ENCODE measurements at regions of chr7 and their contacts with region 1.

Region 1: GRCh38 chr7:27810186-27810585 is 70.2 kb downstream of the TAX1BP1 start:
- DNase-seq: no peak
- ATAC-seq: no peak
- H3K4me3 ChIP-seq: no peak overlapping the region
- H3K27ac ChIP-seq: no peak overlapping the region
- H3K4me1 ChIP-seq: peaks cover 0 to 6% of the 10 kb centered on the region in 2 experiments; a peak in 3 of 5 replicates
- H3K27me3 ChIP-seq: no peaks in the 10 kb centered on the region
- CTCF ChIP-seq: no peak
- EP300 ChIP-seq: no peak
- POLR2A ChIP-seq: no peak
- RAD21 ChIP-seq: no peak

Region 2: GRCh38 chr7:27751888-27752660 is 58.1 kb before region 1 on chr7:
- CTCF ChIA-PET with region 1: no interaction called
- POLR2A ChIA-PET with region 1: no interaction called
- in situ Hi-C with region 1: no loop called
- intact Hi-C with region 1: no loop called
- DNase-seq: no peak
- ATAC-seq: no peak
- H3K4me3 ChIP-seq: no peak overlapping the region
- H3K27ac ChIP-seq: no peak overlapping the region
- H3K4me1 ChIP-seq: no peaks in the 10 kb centered on the region; a peak in 1 of 5 replicates
- H3K27me3 ChIP-seq: no peaks in the 10 kb centered on the region
- CTCF ChIP-seq: no peak
- EP300 ChIP-seq: no peak
- POLR2A ChIP-seq: no peak
- RAD21 ChIP-seq: no peak

Region 3: DNA sequence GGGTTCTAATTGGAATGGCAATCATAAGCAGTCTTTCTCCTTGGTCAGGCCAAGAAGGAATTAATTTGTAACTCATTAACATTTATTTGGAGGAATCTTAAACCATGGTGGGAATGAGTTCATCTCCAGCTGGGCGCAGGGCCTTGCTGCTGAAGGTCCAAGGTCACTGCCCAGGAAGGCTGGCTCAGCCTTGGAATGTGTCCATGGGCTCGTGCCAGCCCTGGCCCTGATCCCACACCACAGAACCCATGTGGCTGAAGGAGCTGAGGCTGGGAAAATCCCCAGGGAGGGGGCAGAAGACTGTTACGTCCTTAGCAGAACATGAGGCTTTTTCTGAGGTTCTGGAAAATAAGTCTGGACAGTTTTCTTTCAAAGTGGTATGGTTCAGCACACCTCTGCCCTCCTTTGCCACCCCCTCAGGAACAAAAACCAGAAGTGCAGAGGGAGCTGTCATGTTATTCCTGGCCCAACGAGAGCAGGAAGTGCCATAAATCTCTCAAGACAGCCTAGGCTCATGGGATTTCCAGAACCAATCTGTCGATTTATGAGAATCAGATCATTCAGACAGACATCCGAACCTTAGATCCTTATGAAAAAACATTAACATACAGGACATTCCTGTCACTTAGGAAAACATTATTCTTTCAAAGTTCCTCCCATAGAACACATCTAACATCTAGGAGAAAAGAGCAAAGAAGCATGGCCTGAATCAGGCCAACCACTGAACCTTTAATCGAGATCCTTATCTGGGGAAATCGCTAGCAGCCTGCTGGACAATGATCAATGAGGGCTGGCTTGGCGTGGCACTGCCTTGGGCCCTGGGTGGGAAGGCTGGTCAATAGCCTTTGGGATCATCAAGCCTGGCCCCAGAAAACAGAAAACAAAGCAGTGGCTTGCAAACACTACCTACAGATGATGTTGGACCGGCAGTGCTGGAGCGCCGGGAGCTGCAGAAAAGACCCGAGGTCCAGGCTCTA is 64.1 kb after region 1 on chr7:
- CTCF ChIA-PET with region 1: no interaction called
- POLR2A ChIA-PET with region 1: no interaction called
- in situ Hi-C with region 1: no loop called
- intact Hi-C with region 1: loop called (anchors 10 kb)
- DNase-seq: no peak
- ATAC-seq: no peak
- H3K4me3 ChIP-seq: no peak overlapping the region
- H3K27ac ChIP-seq: no peak overlapping the region
- H3K4me1 ChIP-seq: no peaks in the 10 kb centered on the region
- H3K27me3 ChIP-seq: peaks cover 50 to 65% of the 10 kb centered on the region in 2 experiments
- CTCF ChIP-seq: no peak
- EP300 ChIP-seq: no peak
- POLR2A ChIP-seq: no peak
- RAD21 ChIP-seq: no peak

Region 4: GRCh38 chr7:27890205-27890849 is 80.1 kb after region 1 on chr7:
- CTCF ChIA-PET with region 1: no interaction called
- POLR2A ChIA-PET with region 1: no interaction called
- in situ Hi-C with region 1: no loop called
- intact Hi-C with region 1: no loop called
- DNase-seq: no peak
- ATAC-seq: no peak
- H3K4me3 ChIP-seq: no peak overlapping the region
- H3K27ac ChIP-seq: no peak overlapping the region
- H3K4me1 ChIP-seq: no peaks in the 10 kb centered on the region
- H3K27me3 ChIP-seq: peaks cover 4 to 10% of the 10 kb centered on the region in 2 experiments; a peak in 3 of 5 replicates
- CTCF ChIP-seq: no peak
- EP300 ChIP-seq: no peak
- POLR2A ChIP-seq: no peak
- RAD21 ChIP-seq: no peak

Region 5: DNA sequence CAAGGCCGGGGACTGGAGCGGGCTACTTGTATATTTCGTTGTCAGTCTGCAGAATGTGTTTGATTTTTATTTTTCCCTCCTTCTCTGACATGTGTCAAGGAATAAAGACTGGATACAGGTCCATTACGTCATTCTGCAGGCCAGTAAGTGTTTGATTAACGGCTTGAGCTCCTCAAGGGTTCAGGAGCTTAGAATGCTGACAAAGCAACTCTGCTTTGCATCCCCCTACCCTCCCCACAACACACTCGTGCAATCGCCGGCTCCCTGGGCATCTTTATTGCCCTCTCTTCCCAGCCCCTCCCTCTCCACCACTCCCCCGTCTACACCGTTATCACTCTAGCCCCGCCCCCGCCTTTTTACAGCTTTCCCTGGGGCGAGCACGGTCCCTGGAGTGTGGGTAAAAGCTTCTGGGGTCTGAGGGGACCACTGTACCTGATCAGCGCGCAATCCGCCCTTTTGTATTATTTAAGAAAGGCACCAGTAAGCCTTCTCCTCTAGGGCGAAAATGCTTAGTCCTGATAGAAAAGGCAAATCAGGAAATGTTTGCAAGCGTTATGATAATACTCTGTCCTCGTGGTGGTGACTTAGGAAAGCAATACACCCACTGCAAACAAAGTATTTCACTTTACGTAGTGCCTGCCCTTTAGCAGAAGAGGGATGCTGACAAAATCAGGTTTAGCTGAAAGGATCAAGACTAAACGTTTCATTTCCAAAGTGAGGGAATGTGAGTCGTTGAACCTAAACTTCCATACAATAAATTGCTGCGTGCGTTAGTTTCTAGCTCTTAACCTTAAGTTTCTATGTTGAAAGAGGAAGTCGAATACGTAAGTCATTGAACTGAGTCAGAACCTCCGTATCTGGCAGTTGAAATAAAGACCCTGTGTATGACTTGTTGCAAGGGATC is 600.7 kb after region 1 on chr7:
- CTCF ChIA-PET with region 1: no interaction called
- POLR2A ChIA-PET with region 1: no interaction called
- in situ Hi-C with region 1: no loop called
- intact Hi-C with region 1: no loop called
- DNase-seq: peak in 2 of 4 experiments; percentile 22 to 29
- ATAC-seq: peak; percentile 38; the same call in 2 of the 3 replicates
- H3K4me3 ChIP-seq: no peak overlapping the region
- H3K27ac ChIP-seq: no peak overlapping the region
- H3K4me1 ChIP-seq: peaks cover 0 to 6% of the 10 kb centered on the region in 2 experiments; a peak in 2 of 5 replicates
- H3K27me3 ChIP-seq: peaks cover 0 to 5% of the 10 kb centered on the region in 2 experiments; a peak in 1 of 5 replicates
- CTCF ChIP-seq: no peak
- EP300 ChIP-seq: no peak
- POLR2A ChIP-seq: no peak
- RAD21 ChIP-seq: no peak